Posterior vena cava (tissue), 2 donors: ENCODE measurements at regions of chr1 and their contacts with region 1.

Region 1: DNA sequence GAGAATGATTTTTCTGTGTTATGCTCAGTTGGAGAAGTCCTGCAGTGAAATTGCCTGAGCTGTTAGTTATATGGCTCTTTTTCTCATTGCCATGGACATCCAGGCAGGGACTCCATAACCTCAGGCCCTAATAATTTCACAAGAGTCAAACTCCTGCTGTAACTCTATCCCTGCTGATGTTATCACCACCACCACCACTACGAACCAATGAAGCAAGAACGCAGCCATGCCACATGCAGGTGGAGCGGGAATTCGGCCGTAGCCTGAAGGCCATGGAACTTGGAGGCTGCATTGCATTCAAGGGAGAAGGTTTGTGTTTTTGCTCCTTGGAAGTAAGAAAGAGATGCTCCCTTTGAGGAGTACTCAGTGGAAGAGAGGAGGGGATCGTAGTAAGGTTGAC is 16.8 kb upstream of the DLGAP3 start:
- DNase-seq: no peak

Region 2: DNA sequence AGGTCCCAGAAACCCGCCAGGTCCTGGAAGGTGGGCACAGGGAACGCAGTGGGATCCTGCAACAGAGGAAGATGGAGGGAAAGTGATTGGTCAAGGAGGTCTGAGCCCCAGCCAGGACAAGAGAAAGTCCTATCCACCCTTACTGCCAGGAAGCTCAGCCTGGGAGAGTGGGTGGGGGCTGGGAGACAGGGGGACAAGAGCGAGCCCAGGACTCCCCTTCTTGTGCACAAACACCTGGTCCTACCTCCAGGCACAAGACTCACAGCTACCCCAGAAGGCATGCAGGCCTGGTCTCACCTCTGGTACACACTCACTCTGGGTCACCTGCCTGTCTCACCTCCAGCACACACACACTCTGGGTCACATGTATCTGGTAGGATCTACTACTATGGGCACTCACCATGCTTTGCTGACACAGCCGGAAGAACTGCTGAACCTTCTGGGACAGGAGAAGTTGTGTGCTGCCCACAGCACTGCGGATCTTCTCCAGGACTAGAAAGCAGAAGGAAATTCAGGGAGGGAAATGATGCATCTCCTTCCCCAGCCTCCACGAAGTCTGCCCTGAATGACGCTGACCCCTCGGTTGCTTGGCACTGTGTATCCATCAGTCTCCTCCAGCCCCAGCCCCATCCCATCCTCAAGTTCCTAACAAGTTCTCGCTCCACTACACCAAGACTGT is 78.9 kb before region 1 on chr1:
- intact Hi-C with region 1: no loop called
- DNase-seq: no peak

Region 3: GRCh38 chr1:34976384-34977209 is 30.4 kb after region 1 on chr1:
- intact Hi-C with region 1: loop called in 1 of 2 experiments (anchors 1 kb)
- DNase-seq: no peak

Region 4: DNA sequence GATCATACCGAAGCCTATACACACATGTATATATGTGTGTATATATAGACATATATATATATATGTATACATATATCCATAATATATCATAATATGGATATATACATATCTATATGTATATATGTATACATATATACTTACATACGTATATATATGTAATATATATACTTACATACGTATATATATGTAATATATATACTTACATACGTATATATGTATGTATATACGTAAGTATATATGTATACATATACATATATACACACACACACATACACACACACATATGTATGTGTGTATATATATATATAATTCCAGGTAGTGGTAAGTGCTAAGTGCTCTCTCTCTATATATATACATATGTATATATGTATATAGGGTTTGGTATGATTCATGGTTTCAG is 48.7 kb after region 1 on chr1:
- intact Hi-C with region 1: no loop called
- DNase-seq: no peak

Region 5: DNA sequence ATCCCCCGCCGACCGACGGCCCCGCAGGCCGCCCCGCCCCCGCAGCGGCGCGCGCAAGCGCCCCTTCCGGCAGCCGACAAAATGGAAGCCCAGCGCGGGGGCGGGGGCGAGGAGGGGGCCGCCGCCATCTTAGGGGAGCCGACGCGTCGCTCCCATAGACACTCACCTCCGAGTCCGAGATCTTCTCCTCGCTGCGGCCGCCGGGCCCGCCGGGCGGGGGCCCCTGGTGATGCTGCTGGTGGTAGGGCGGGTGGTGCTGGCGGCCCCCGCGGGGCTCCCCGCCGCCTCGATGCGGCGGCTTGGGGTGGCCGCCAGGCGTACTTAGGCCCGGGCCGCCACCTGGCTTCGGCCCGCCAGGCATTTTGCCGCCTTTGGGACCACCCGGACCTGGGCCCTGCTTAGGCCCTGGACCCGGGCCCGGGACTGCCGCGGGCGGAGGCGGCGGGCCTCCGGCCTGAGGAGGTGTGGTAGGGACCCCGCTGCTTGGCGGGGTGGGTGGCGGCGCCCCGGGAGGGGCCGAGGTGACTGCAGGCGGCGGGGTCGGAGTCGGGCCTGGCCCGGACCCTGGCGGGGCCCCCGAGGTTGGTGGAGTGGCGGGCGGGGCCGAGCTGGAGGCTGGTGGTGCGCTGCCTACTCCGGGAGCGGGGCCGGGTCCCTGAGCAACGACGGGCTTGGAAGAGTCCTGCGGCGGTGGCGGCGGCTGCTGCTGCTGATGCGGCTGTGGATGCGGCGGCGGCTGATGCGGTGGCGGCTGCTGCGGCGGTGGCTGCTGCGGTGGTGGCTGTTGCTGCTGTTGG is 246.0 kb after region 1 on chr1:
- intact Hi-C with region 1: no loop called
- DNase-seq: peak; percentile 97